Caco-2 (cell line): ENCODE measurements at regions of chr9 and their contacts with region 1.

Region 1: DNA sequence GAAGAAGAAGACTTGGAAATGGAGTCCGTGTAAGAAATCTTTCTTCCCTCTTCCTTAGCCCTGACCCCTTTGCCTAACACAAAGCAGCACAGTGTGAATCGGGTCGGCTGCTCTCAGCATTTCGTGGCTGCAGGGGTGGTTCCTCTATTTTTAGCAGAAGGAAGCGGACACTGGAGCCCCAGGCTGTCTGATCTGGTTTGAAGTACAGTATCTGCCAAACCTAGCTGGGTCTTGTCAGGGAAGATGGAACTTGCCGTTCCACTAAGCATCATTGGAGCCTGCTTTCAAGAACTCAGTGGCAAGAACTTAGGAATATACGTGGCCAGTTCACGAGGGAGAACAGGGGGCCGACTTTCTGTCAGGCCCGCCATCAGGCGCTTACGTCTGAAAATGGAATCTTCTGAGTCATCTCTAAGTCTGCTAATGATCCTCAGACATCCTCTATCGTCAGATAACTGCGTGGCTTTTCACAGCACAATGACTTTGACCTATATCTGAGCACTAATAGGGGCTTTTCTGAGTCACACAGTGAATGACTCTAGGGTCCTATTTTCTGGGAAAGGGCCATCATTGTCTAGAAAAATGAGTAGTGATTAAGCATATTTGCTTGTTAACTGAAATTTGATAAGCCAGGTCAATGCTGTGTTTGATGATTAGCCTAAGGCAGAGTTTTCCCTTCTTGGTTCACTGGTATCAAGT is 43.3 kb upstream of the NCS1 start:
- DNase-seq: no peak
- H3K4me3 ChIP-seq: no peak overlapping the region
- H3K4me3 Mint-ChIP-seq: no peak overlapping the region
- H3K27ac Mint-ChIP-seq: no peak overlapping the region
- H3K4me1 ChIP-seq: no peaks in the 10 kb centered on the region
- H3K4me1 Mint-ChIP-seq: no peaks in the 10 kb centered on the region
- H3K27me3 ChIP-seq: no peaks in the 10 kb centered on the region
- H3K27me3 Mint-ChIP-seq: no peaks in the 10 kb centered on the region
- CTCF ChIP-seq: no peak

Region 2: DNA sequence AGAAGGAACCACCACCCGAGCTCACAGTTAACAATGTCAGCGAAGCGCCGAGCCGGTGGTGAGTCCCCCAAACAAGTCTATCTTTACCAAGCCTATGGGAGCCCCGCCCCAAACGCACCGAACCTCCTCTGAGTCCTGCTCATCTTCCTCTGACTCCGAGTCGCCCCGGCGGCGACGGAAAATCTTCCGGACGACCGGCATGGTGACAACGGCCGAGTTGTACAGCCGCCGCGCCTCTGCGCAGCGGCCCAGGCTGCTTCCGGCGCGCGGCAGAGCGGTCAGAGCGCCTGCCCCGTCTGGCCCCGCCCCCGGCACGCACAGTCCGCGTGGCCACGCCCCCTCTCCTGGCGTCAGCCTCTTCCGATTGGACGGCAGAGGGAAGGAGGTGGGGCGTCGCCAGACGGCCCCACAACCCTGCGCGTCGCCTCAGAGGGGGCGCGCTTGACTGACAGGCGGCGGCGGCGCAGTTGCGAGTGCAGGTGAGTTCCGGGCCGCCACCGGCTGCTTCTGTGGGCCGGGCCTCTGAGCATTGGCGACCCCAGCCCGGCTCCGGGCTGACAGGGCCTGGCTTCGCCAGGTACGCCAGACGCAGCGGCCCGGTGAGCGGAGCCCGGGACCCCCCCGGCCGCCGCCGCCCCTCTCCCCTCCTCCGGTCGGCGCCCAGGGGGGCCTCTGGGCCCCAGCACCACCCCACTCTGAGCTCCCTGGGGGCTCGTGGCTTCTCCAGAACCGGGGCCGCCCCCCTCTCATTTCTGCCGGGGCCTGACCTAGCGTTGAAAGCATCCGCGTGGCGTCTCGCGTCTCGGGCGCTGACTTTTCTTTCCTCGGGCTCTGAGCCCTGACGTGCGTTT is 293.6 kb before region 1 on chr9 and contains the starts of genes C9orf78 and USP20:
- CTCF ChIA-PET with region 1: no interaction called
- POLR2A ChIA-PET with region 1: no interaction called
- intact Hi-C with region 1: no loop called
- DNase-seq: peak; percentile 95 to 98
- H3K4me3 ChIP-seq: peak within 1 kb of the TSS; percentile 82
- H3K4me3 Mint-ChIP-seq: peak within 1 kb of the TSS; percentile 100
- H3K27ac Mint-ChIP-seq: peak within 1 kb of the TSS; percentile 100
- H3K4me1 ChIP-seq: peaks cover 3% of the 10 kb centered on the region; the same call in 1 of the 2 replicates
- H3K4me1 Mint-ChIP-seq: peaks cover 11% of the 10 kb centered on the region
- H3K27me3 ChIP-seq: no peaks in the 10 kb centered on the region
- H3K27me3 Mint-ChIP-seq: no peaks in the 10 kb centered on the region
- CTCF ChIP-seq: no peak
- total RNA-seq, gene C9orf78: 38.3 and 44.1 TPM in 2 replicates
- total RNA-seq, gene USP20: 13.9 and 16.5 TPM in 2 replicates

Region 3: GRCh38 chr9:130053504-130054324 is 75.2 kb before region 1 on chr9 and contains the start of gene GPR107:
- CTCF ChIA-PET with region 1: no interaction called
- POLR2A ChIA-PET with region 1: no interaction called
- intact Hi-C with region 1: no loop called
- DNase-seq: peak; percentile 76 to 84
- H3K4me3 ChIP-seq: peak within 1 kb of the TSS; percentile 75
- H3K4me3 Mint-ChIP-seq: peak within 1 kb of the TSS; percentile 99
- H3K27ac Mint-ChIP-seq: peak within 1 kb of the TSS; percentile 96
- H3K4me1 ChIP-seq: 0 out of 2 replicates have a peak, but pooled peaks cover 3% of the 10 kb centered on the region
- H3K4me1 Mint-ChIP-seq: no peaks in the 10 kb centered on the region
- H3K27me3 ChIP-seq: no peaks in the 10 kb centered on the region
- H3K27me3 Mint-ChIP-seq: no peaks in the 10 kb centered on the region
- CTCF ChIP-seq: no peak
- total RNA-seq, gene GPR107: 49.8 and 53.1 TPM in 2 replicates

Region 4: DNA sequence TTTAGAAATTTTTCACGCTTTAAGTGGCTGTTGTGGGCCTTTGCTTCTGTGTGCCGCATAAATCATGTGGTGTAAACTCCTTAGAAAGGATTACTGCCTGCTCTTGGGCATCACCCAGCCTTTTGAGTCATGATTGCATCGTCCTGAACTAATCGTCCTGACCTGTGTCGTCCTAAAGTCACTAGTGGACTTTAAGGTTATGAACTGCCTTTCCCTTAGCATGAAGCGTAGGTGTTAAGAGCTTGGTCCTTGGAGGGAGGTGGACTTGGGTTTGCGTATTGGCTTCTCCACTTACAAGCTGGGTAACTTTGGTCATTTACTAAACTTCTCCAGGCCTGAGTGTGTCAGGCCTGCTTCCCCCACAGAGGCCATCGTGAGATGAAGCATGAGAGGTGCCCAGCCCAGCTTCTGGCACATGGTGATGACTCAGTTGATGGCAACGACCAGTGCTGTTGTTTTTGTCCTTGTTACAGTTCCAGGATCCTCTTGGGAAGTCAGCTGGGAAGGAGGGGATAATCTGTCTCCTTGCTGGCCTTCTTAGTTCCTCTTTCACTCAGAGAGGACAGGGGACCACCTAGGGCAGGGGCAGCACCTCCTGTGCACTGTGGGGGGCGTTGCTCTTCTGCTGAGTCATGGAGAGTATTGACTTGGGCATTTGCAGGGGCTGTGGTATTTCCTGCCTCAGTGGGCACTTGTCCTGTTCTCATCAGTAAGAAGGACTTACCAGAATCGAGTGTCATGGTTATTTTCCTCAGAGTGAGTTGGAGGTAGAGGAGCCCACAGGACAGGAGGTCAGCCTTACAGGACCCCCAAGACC is 10.9 kb before region 1 on chr9:
- CTCF ChIA-PET with region 1: no interaction called
- POLR2A ChIA-PET with region 1: no interaction called
- intact Hi-C with region 1: no loop called
- DNase-seq: no peak
- H3K4me3 ChIP-seq: no peak overlapping the region
- H3K4me3 Mint-ChIP-seq: no peak overlapping the region
- H3K27ac Mint-ChIP-seq: no peak overlapping the region
- H3K4me1 ChIP-seq: no peaks in the 10 kb centered on the region
- H3K4me1 Mint-ChIP-seq: no peaks in the 10 kb centered on the region
- H3K27me3 ChIP-seq: no peaks in the 10 kb centered on the region
- H3K27me3 Mint-ChIP-seq: no peaks in the 10 kb centered on the region
- CTCF ChIP-seq: no peak

Region 5: DNA sequence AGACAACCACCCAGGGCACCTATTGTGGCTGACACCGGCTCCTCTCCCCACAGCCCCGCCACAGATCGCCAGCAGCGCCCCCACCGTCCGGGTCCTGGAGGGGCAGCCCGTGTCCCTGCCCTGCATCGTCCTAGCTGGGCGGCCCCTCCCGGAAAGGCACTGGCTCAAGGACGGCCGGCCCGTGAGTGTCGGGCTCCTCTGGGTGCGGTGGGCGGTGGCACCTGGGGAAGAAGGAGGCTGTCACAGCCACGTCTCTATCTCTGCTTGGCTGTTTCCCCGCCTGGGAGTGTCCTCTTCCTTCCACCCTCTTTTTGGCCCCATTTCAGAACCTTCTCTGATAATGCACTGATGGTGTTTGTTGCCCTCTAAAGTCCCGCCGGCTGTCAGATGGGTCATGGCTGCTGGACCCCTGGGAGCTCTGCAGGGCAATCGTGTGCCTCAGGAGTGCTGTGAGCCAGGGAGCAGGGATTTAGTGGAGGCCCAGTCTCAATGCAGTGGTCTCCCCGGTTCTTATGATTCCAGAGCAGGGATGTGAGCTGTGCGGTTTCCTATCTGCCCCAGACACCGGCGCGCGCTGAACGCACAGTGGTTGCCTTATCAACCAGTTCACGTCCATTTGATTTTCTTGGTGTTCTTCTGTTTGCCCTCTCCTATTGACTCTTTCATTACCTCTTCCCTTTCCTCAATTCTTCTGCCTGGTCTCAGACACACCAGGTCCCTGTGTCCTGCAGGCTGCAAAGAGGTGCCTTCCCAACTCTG is 192.0 kb after region 1 on chr9:
- CTCF ChIA-PET with region 1: no interaction called
- POLR2A ChIA-PET with region 1: interaction called, 12 read pairs
- intact Hi-C with region 1: no loop called
- DNase-seq: no peak
- H3K4me3 ChIP-seq: no peak overlapping the region
- H3K4me3 Mint-ChIP-seq: no peak overlapping the region
- H3K27ac Mint-ChIP-seq: no peak overlapping the region
- H3K4me1 ChIP-seq: peaks cover 9% of the 10 kb centered on the region
- H3K4me1 Mint-ChIP-seq: peaks cover 13% of the 10 kb centered on the region
- H3K27me3 ChIP-seq: no peaks in the 10 kb centered on the region
- H3K27me3 Mint-ChIP-seq: peaks cover 5% of the 10 kb centered on the region
- CTCF ChIP-seq: no peak

Region 6: DNA sequence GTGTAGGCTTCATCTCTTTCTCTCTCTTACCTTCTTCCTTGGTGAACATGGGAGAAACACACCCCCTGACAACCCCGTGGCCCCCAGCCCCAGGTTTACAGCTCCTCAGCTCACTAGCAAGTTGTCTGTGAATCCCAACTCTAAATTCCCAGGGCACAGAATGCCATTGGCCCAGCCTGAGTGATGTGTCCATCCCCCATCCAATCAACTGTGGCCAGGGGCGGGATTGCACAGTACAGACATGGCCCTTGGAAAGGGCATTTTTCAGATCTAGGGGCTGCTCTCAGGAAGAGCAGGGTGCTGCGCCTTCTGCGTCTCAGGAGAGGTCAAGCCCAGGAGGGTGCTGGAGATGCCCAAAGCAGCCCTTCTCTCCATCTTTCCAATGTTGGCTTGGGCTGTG is 267.7 kb after region 1 on chr9:
- CTCF ChIA-PET with region 1: no interaction called
- POLR2A ChIA-PET with region 1: no interaction called
- intact Hi-C with region 1: no loop called
- DNase-seq: no peak
- H3K4me3 ChIP-seq: no peak overlapping the region
- H3K4me3 Mint-ChIP-seq: no peak overlapping the region
- H3K27ac Mint-ChIP-seq: no peak overlapping the region
- H3K4me1 ChIP-seq: no peaks in the 10 kb centered on the region
- H3K4me1 Mint-ChIP-seq: no peaks in the 10 kb centered on the region
- H3K27me3 ChIP-seq: no peaks in the 10 kb centered on the region
- H3K27me3 Mint-ChIP-seq: no peaks in the 10 kb centered on the region
- CTCF ChIP-seq: no peak